ENCODE measurements at regions of chr16 and their contacts with region 1.

Region 1: DNA sequence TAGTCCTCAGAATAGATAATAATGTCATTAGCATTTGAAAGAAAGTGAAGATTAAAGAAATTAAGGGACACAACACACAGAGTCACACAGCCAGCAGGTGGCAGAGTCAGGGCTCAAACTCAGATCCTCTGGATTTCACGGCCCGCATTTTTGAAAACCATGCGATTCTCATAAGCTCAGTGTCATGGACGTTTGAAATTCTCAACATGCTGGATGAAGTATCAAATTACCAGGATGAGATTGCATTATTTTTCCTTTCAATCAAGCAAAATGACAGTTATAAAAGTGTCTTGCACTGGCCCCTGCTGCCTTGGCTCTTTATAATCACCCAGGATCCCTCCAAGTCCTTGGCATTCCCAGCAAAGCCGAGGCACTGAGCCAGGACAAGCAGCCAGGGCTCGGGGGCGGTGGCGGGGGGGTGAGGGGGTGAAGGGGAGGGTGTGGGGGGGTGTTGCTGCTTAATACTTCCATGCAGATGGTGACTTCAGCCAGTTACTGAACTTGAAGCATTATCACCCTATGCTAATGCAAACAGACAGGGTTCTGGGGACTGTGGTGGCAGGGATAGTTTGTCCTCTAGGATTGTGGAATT is 6.6 kb upstream of the BMERB1 start:
- DNase-seq: peak; percentile 83
- ATAC-seq: peak; percentile 86

Region 2: GRCh38 chr16:15548482-15548891 is 120.7 kb after region 1 on chr16:
- intact Hi-C with region 1: loop called (anchors 2 kb)
- DNase-seq: no peak
- ATAC-seq: no peak

Region 3: GRCh38 chr16:15704545-15704987 is 276.8 kb after region 1 on chr16:
- intact Hi-C with region 1: loop called (anchors 5 kb)
- DNase-seq: peak; percentile 79
- ATAC-seq: peak; percentile 81

Measured in Right ventricle myocardium inferior (tissue), 1 donor.